ENCODE measurements at regions of chr1 and their contacts with region 1.

Region 1: GRCh38 chr1:205485338-205486228 is 18.9 kb upstream of the CDK18 start:
- DNase-seq: peak; percentile 42 to 86 (median 56)
- ATAC-seq: peak; percentile 78
- H3K4me3 ChIP-seq: no peak overlapping the region
- H3K4me3 Mint-ChIP-seq: no peak overlapping the region
- H3K27ac ChIP-seq: no peak overlapping the region
- H3K27ac Mint-ChIP-seq: no peak overlapping the region
- H3K4me1 ChIP-seq: peaks cover 26% of the 10 kb centered on the region
- H3K4me1 Mint-ChIP-seq: peaks cover 10% of the 10 kb centered on the region
- H3K27me3 ChIP-seq: peaks cover 7 to 12% of the 10 kb centered on the region in 2 experiments
- H3K27me3 Mint-ChIP-seq: peaks cover 77% of the 10 kb centered on the region
- CTCF ChIP-seq: peak; percentile 90

Region 2: DNA sequence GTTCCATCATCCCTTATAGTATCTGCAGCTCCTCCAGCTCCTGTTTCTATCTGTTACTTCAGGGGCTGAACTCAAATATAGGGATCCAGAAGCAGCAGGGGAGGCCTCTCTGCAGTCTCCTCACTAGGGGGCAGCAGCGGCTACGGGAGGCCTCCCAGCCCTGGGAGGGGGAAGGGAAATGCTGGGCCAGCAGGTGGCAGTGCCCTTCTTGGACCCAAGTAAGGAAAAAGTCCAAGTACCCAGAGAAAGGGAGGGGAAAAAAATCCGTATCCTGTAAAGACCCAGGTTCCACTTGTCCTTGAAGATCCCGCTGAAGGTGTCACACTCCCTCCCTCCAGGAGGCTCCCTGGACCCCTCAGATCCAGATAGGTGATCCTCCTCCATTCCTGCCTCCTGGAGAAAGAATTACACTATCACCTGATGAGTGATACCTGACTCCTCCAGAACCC is 149.9 kb before region 1 on chr1:
- CTCF ChIA-PET with region 1: interaction called, 8 read pairs
- POLR2A ChIA-PET with region 1: interaction called, 4 read pairs
- intact Hi-C with region 1: loop called (anchors 5 kb)
- DNase-seq: peak; percentile 63 to 89 (median 74)
- ATAC-seq: peak; percentile 99
- H3K4me3 ChIP-seq: no peak overlapping the region
- H3K4me3 Mint-ChIP-seq: no peak overlapping the region
- H3K27ac ChIP-seq: no peak overlapping the region
- H3K27ac Mint-ChIP-seq: no peak overlapping the region
- H3K4me1 ChIP-seq: no peaks in the 10 kb centered on the region
- H3K4me1 Mint-ChIP-seq: no peaks in the 10 kb centered on the region
- H3K27me3 ChIP-seq: no peaks in the 10 kb centered on the region
- H3K27me3 Mint-ChIP-seq: no peaks in the 10 kb centered on the region
- CTCF ChIP-seq: peak; percentile 93

Region 3: DNA sequence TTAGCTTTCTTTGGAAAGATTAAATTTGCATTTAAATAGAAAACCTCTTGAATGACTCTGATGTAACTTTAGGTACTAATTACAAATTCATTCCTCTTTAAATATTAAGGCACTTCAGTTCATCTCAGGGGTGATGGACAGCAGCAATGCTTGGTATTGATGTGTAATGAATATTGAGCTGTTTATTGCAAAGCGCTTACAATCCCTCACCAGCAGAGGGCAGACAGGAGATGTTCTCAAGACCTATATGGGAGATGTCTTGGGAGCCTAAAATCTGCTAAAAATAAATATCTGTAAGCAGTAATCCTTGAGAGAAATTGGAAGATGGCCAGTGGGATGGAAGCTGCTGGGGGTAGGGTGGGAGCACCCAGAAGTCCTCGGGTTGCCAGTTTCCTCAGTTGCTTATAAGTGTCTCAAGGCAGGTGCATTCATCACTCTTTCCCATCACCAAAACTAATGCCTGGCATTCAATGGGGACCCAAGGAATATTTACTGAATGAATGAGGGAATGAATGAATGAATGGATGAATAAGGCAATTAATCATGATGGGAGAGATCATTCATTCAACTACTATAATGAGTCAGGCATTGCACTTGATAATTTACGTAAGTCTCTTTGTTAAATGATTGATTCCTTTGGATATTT is 131.2 kb before region 1 on chr1:
- CTCF ChIA-PET with region 1: interaction called, 26 read pairs
- POLR2A ChIA-PET with region 1: interaction called, 8 read pairs
- intact Hi-C with region 1: loop called (anchors 1 to 2 kb)
- DNase-seq: peak; percentile 34 to 82 (median 52)
- ATAC-seq: peak; percentile 83
- H3K4me3 ChIP-seq: no peak overlapping the region
- H3K4me3 Mint-ChIP-seq: no peak overlapping the region
- H3K27ac ChIP-seq: no peak overlapping the region
- H3K27ac Mint-ChIP-seq: no peak overlapping the region
- H3K4me1 ChIP-seq: no peaks in the 10 kb centered on the region
- H3K4me1 Mint-ChIP-seq: no peaks in the 10 kb centered on the region
- H3K27me3 ChIP-seq: peaks cover 6 to 11% of the 10 kb centered on the region in 2 experiments
- H3K27me3 Mint-ChIP-seq: peaks cover 16% of the 10 kb centered on the region
- CTCF ChIP-seq: peak; percentile 95

Region 4: DNA sequence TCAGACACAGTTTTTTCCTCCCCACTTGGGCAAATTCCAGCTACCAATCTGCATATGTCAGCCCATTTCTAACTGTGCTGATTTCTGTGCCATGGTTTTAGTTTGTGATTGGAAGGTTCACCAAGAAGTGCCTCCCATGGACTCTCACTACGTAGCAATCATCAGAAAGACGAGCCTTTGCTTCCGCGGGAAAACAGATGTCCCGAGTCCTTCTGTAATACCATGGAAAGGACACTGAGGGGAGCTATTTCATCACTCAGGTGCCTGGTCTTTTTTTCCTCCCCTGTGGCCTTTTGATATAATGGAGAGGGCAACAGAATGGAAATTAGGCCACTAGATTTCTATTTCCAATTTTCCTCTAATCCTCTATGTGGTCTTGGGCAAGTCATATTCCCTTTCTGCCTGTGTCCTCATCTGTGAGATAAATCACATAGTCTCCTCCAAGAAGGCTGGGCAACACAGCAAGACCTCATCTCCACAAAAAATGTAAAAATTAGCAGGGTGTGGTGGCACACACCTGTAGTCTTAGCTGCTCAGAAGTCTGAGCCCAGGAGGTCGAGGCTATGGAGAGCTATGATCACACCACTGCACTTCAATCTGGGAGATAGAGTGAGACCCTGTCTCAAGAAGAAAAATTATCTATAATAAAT is 88.5 kb before region 1 on chr1:
- CTCF ChIA-PET with region 1: interaction called, 39 read pairs
- POLR2A ChIA-PET with region 1: no interaction called
- intact Hi-C with region 1: loop called (anchors 1 kb)
- DNase-seq: peak in 4 of 14 experiments; percentile 15 to 65 (median 60)
- ATAC-seq: peak; percentile 41
- H3K4me3 ChIP-seq: no peak overlapping the region
- H3K4me3 Mint-ChIP-seq: no peak overlapping the region
- H3K27ac ChIP-seq: no peak overlapping the region
- H3K27ac Mint-ChIP-seq: no peak overlapping the region
- H3K4me1 ChIP-seq: peaks cover 2% of the 10 kb centered on the region
- H3K4me1 Mint-ChIP-seq: peaks cover 7% of the 10 kb centered on the region
- H3K27me3 ChIP-seq: no peaks in the 10 kb centered on the region
- H3K27me3 Mint-ChIP-seq: peaks cover 19% of the 10 kb centered on the region
- CTCF ChIP-seq: peak; percentile 37

Region 5: DNA sequence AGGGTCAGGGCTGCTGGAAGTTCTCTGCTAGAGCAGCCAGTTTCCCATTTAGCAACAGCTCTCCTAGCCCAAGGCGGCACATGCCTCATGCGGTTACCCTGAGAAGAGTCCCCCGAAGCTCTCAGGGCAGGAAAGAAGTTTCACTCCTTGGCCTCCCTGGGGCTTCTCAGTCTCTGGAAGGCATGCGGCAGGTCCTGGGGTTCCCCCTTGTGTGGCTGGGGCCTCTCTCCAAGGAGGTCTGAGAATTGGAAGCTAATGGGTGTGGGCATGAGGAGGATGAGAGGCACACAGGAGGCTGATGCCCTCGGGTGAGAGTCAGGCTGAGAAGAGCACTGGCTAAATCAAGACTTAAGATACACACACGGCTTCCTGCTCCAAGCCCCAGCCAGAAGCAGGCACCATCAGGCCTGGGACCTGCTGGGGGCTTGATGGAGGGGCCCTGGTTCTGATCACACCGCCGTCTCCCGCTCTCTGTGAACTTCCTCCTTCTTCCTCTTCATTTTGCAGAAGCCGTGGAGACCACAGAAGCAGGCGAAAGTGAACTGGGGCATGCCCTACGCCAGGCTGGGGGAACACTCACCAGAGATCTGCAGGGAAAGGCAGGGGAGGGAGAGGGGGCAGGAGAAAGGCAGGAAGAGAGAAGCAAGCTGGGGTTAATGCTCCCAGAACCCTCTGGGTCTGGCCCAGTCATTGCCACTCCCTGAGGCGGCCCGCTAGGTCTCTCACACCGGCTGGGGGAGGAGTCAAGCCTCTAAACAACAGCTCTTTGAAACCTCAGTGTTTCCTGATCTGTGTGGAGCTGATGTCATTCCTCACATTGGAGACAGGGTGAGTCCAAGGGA is 44.9 kb before region 1 on chr1:
- CTCF ChIA-PET with region 1: interaction called, 5 read pairs
- POLR2A ChIA-PET with region 1: no interaction called
- intact Hi-C with region 1: loop called in 1 of 2 experiments (anchors 5 kb)
- DNase-seq: peak; percentile 47 to 86 (median 66)
- ATAC-seq: peak; percentile 98
- H3K4me3 ChIP-seq: peak overlapping the region; percentile 57
- H3K4me3 Mint-ChIP-seq: peak overlapping the region; percentile 88
- H3K27ac ChIP-seq: peak overlapping the region; percentile 39 to 75
- H3K27ac Mint-ChIP-seq: peak overlapping the region; percentile 90
- H3K4me1 ChIP-seq: peaks cover 31% of the 10 kb centered on the region
- H3K4me1 Mint-ChIP-seq: peaks cover 26% of the 10 kb centered on the region
- H3K27me3 ChIP-seq: peaks cover 0 to 5% of the 10 kb centered on the region in 2 experiments
- H3K27me3 Mint-ChIP-seq: peaks cover under 1% of the 10 kb centered on the region
- CTCF ChIP-seq: no peak

Region 6: GRCh38 chr1:205523891-205524793 is 38.6 kb after region 1 on chr1:
- CTCF ChIA-PET with region 1: interaction called, 20 read pairs
- POLR2A ChIA-PET with region 1: interaction called, 5 read pairs
- intact Hi-C with region 1: loop called (anchors 1 kb)
- DNase-seq: peak; percentile 48 to 83 (median 68)
- ATAC-seq: peak; percentile 61
- H3K4me3 ChIP-seq: no peak overlapping the region
- H3K4me3 Mint-ChIP-seq: no peak overlapping the region
- H3K27ac ChIP-seq: no peak overlapping the region
- H3K27ac Mint-ChIP-seq: no peak overlapping the region
- H3K4me1 ChIP-seq: peaks cover 4% of the 10 kb centered on the region
- H3K4me1 Mint-ChIP-seq: no peaks in the 10 kb centered on the region
- H3K27me3 ChIP-seq: peaks cover 0 to 4% of the 10 kb centered on the region in 2 experiments
- H3K27me3 Mint-ChIP-seq: no peaks in the 10 kb centered on the region
- CTCF ChIP-seq: peak; percentile 74

Region 7: DNA sequence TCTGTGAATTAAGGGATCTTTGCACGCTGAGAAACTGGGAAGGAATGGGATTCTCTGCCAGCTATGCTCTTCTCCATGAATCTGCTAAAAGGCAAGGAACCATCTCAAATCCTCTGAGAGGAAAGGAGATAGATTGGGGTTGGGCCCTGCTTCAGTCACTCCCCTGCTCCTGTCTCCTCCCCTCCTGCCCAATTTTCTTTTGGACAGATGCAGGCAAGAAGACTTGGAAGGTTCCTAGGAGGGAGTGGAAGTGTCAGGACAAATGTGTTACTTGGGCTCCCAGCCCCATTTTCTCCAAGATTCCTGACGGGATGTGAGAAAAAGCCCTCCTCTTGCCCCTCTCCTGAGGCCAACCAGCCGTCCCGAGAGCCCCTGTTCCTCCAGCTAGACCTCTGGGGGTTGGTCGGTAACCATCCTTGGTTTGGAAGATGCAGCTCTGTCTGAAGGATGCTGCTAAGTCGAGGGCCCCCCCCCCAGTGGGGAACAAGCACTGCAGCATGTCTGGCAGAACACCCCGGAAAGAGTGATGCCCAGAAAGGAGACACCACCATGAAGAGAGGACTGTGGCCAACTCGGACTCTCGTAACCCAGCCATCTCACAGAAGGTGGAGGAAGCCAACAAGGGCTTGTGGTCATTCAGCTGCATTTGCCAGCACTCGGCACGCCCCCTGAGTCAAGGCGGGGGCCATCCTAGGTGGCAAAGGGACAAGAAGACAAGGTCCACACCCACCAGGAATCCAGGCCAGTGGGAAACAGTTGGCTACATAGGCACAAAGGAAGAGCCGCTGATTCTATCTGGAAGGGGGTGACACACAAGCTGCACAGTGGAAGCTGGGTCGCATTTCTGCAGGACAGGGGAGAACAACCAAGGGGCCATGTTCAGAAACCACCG is 62.6 kb after region 1 on chr1:
- CTCF ChIA-PET with region 1: no interaction called
- POLR2A ChIA-PET with region 1: no interaction called
- intact Hi-C with region 1: no loop called
- DNase-seq: peak in 1 of 14 experiments; percentile 19
- ATAC-seq: no peak
- H3K4me3 ChIP-seq: no peak overlapping the region
- H3K4me3 Mint-ChIP-seq: no peak overlapping the region
- H3K27ac ChIP-seq: no peak overlapping the region
- H3K27ac Mint-ChIP-seq: no peak overlapping the region
- H3K4me1 ChIP-seq: peaks cover 6% of the 10 kb centered on the region
- H3K4me1 Mint-ChIP-seq: peaks cover 5% of the 10 kb centered on the region
- H3K27me3 ChIP-seq: peaks cover 13 to 23% of the 10 kb centered on the region in 2 experiments
- H3K27me3 Mint-ChIP-seq: peaks cover 79% of the 10 kb centered on the region
- CTCF ChIP-seq: no peak

Region 8: GRCh38 chr1:205783904-205784303 is 298.3 kb after region 1 on chr1:
- CTCF ChIA-PET with region 1: no interaction called
- POLR2A ChIA-PET with region 1: no interaction called
- intact Hi-C with region 1: no loop called
- DNase-seq: no peak
- ATAC-seq: no peak
- H3K4me3 ChIP-seq: no peak overlapping the region
- H3K4me3 Mint-ChIP-seq: no peak overlapping the region
- H3K27ac ChIP-seq: no peak overlapping the region
- H3K27ac Mint-ChIP-seq: no peak overlapping the region
- H3K4me1 ChIP-seq: peaks cover 8% of the 10 kb centered on the region
- H3K4me1 Mint-ChIP-seq: peaks cover 7% of the 10 kb centered on the region
- H3K27me3 ChIP-seq: no peaks in the 10 kb centered on the region
- H3K27me3 Mint-ChIP-seq: no peaks in the 10 kb centered on the region
- CTCF ChIP-seq: no peak

Measured in CD4-positive, alpha-beta T cell (primary cell).